H1 (cell line): ENCODE measurements at regions of chr7 and their contacts with region 1.

Region 1: GRCh38 chr7:128178611-128179010 is 62.5 kb upstream of the LEP start:
- DNase-seq: no peak
- H3K4me3 ChIP-seq: no peak overlapping the region
- H3K27ac ChIP-seq: no peak overlapping the region
- H3K4me1 ChIP-seq: peaks cover 0 to 6% (median 0%) of the 10 kb centered on the region in 4 experiments; a peak in 1 of 7 replicates
- H3K27me3 ChIP-seq: no peaks in the 10 kb centered on the region; a peak in 2 of 7 replicates
- CTCF ChIP-seq: no peak
- EP300 ChIP-seq: no peak
- POLR2A ChIP-seq: no peak
- RAD21 ChIP-seq: no peak

Region 2: GRCh38 chr7:128201051-128201689 is 22.6 kb after region 1 on chr7:
- CTCF ChIA-PET with region 1: interaction called, 131 read pairs
- POLR2A ChIA-PET with region 1: no interaction called
- DNase-seq: peak in 1 of 2 experiments; percentile 94
- H3K4me3 ChIP-seq: peak overlapping the region; percentile 52 to 71 (median 66)
- H3K27ac ChIP-seq: no peak overlapping the region
- H3K4me1 ChIP-seq: peaks cover 0 to 7% (median 6%) of the 10 kb centered on the region in 4 experiments; a peak in 6 of 7 replicates
- H3K27me3 ChIP-seq: peaks cover 15 to 47% (median 39%) of the 10 kb centered on the region in 4 experiments
- CTCF ChIP-seq: no peak
- EP300 ChIP-seq: no peak
- POLR2A ChIP-seq: no peak
- RAD21 ChIP-seq: no peak